Caco-2 (cell line): ENCODE measurements at regions of chr7 and their contacts with region 1.

Region 1: GRCh38 chr7:135757719-135758411 is 9.3 kb upstream of the FAM180A start:
- DNase-seq: no peak
- H3K4me3 ChIP-seq: no peak overlapping the region
- H3K4me3 Mint-ChIP-seq: no peak overlapping the region
- H3K27ac Mint-ChIP-seq: no peak overlapping the region
- H3K4me1 ChIP-seq: peaks cover 25% of the 10 kb centered on the region
- H3K4me1 Mint-ChIP-seq: peaks cover 11% of the 10 kb centered on the region
- H3K27me3 ChIP-seq: no peaks in the 10 kb centered on the region
- H3K27me3 Mint-ChIP-seq: no peaks in the 10 kb centered on the region
- CTCF ChIP-seq: no peak

Region 2: GRCh38 chr7:135710417-135711138 is 47.3 kb before region 1 on chr7:
- CTCF ChIA-PET with region 1: no interaction called
- POLR2A ChIA-PET with region 1: no interaction called
- intact Hi-C with region 1: loop called (anchors 2 kb)
- DNase-seq: peak in 1 of 2 experiments; percentile 37
- H3K4me3 ChIP-seq: no peak overlapping the region
- H3K4me3 Mint-ChIP-seq: no peak overlapping the region
- H3K27ac Mint-ChIP-seq: no peak overlapping the region
- H3K4me1 ChIP-seq: peaks cover 25% of the 10 kb centered on the region
- H3K4me1 Mint-ChIP-seq: no peaks in the 10 kb centered on the region
- H3K27me3 ChIP-seq: no peaks in the 10 kb centered on the region
- H3K27me3 Mint-ChIP-seq: no peaks in the 10 kb centered on the region
- CTCF ChIP-seq: peak; percentile 63 to 93